PC-3 (cell line): ENCODE measurements at regions of chr14 and their contacts with region 1.

Region 1: DNA sequence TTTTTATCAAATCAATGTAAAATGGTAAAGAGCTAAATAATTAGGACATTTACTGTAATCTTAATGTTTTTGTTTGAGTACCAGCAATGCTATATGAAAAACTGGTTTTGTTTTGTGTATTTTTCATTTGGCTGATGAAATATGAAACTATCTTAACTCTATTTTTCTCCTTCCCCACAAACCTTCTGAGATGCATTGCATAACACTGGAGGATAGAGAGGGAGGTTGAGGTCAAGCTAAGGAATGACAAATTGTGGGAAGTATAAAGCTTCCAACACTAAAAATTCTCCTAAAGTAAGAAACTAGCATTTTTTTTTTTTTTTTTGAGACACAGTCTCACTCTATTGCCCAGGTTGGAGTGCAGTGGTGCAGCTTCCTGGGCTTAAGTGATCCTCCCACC is 31.5 kb upstream of the SRP54 start:
- DNase-seq: no peak
- ATAC-seq: no peak
- H3K4me3 ChIP-seq: no peak overlapping the region
- H3K27ac ChIP-seq: no peak overlapping the region
- H3K4me1 ChIP-seq: no peaks in the 10 kb centered on the region
- H3K27me3 ChIP-seq: no peaks in the 10 kb centered on the region
- CTCF ChIP-seq: no peak

Region 2: DNA sequence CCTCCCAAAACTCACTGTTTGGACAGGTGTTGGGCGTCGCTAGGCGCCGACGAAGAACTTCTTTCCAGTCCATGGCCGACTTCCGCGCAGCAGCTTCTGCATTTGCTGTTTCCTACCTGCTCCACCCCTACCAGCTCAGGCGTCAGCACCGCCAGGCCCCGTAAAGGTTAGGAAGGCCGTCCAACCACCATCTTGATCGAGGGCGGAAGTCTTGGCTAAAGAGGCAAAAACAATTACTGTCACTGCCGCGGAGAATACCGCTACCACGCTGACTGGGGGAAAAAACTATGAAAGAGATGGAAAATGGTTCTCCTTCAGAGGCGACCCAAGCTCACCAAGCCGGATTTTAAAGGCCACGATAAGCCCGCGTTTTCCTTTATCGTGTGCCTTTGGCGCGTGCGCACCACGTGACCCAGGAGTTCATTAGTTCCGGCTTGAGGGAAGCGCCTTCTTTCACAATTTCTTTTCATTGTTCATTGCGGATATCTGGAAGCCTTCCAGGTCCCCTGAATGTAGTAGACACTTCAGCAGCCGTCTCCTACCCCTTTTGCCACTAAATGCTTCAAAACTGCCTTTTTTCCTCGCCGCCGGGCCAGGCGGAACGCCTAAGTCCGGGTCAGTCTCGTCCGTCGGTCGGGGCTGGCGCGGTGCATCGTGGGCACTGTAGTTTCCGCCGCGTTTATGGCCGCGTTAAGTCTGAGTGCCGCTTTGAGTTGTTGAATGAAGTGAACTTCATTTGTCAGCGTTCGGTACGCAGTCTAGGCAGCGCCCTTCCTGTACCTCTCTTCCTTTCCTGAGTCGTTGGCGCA is 170.8 kb after region 1 on chr14 and contains the starts of genes PPP2R3C and PRORP:
- CTCF ChIA-PET with region 1: interaction called, 11 read pairs
- POLR2A ChIA-PET with region 1: no interaction called
- intact Hi-C with region 1: no loop called
- DNase-seq: peak; percentile 98
- ATAC-seq: peak; percentile 85
- H3K4me3 ChIP-seq: peak within 1 kb of the TSS; percentile 83
- H3K27ac ChIP-seq: peak within 1 kb of the TSS; percentile 92
- H3K4me1 ChIP-seq: peaks cover 13% of the 10 kb centered on the region
- H3K27me3 ChIP-seq: no peaks in the 10 kb centered on the region
- CTCF ChIP-seq: no peak
- total RNA-seq, gene PPP2R3C: 15.2 and 20.3 TPM in 2 replicates
- total RNA-seq, gene PRORP: 25.1 and 25.3 TPM in 2 replicates

Region 3: DNA sequence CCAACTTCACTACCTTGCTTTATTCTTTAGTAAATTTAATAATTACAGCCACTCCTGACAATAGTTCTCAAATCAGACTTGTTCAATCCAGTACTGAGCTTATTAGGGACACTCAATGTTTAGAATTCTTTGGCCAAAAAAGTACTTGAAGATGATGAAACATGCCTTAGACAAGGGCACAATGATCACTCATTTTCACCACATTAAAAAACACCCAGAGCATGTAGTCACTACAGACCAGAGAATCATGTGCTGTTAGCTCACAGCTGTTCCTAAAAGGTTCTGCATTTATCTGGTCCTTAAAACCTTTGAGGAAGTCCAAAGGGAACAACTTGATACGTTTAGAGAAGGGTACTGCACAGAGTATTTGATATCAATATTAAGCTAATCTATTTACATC is 681.4 kb after region 1 on chr14:
- CTCF ChIA-PET with region 1: no interaction called
- POLR2A ChIA-PET with region 1: no interaction called
- intact Hi-C with region 1: no loop called
- DNase-seq: no peak
- ATAC-seq: no peak
- H3K4me3 ChIP-seq: no peak overlapping the region
- H3K27ac ChIP-seq: no peak overlapping the region
- H3K4me1 ChIP-seq: no peaks in the 10 kb centered on the region
- H3K27me3 ChIP-seq: no peaks in the 10 kb centered on the region
- CTCF ChIP-seq: no peak